IMR-90 (cell line): ENCODE measurements at regions of chr17 and their contacts with region 1.

Region 1: GRCh38 chr17:13520899-13521572 is 80.7 kb downstream of the HS3ST3A1 start:
- DNase-seq: peak; percentile 89
- ATAC-seq: peak; percentile 81
- H3K4me3 ChIP-seq: no peak overlapping the region
- H3K27ac ChIP-seq: no peak overlapping the region
- H3K4me1 ChIP-seq: peaks cover 5% of the 10 kb centered on the region
- H3K27me3 ChIP-seq: no peaks in the 10 kb centered on the region
- CTCF ChIP-seq: no peak
- POLR2A ChIP-seq: no peak
- RAD21 ChIP-seq: no peak

Region 2: DNA sequence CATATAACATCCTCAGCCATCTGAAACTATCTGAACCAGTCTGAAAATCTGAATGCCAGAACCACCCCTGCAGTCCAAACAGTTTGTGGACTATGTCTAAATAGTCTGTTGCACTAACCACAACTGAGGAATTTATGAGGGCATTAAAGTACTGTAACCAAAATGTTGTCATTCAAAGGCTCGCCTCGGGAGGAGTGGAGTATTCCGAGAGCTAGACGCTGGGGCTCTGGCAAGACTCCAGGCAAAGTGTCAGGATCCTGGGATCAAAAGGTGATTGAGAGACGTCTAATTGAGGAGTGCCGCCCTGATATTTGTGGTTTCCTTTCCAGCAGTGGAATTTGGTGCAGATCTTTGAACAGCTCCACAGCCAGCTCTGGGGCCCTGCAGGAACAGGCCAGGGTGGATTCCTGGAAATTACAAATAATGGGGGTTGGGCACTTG is 998.3 kb before region 1 on chr17:
- CTCF ChIA-PET with region 1: no interaction called
- POLR2A ChIA-PET with region 1: no interaction called
- dilution Hi-C with region 1: no loop called
- in situ Hi-C with region 1: no loop called
- intact Hi-C with region 1: no loop called
- DNase-seq: peak; percentile 69
- ATAC-seq: peak; percentile 87
- H3K4me3 ChIP-seq: no peak overlapping the region
- H3K27ac ChIP-seq: peak overlapping the region; percentile 17; the same call in 1 of the 2 replicates
- H3K4me1 ChIP-seq: peaks cover 6% of the 10 kb centered on the region; the same call in 1 of the 2 replicates
- H3K27me3 ChIP-seq: no peaks in the 10 kb centered on the region
- CTCF ChIP-seq: no peak
- POLR2A ChIP-seq: no peak
- RAD21 ChIP-seq: no peak

Region 3: GRCh38 chr17:13485354-13485753 is 35.7 kb before region 1 on chr17:
- CTCF ChIA-PET with region 1: interaction called, 7 read pairs
- POLR2A ChIA-PET with region 1: interaction called, 16 read pairs
- dilution Hi-C with region 1: no loop called
- in situ Hi-C with region 1: no loop called
- intact Hi-C with region 1: no loop called
- DNase-seq: no peak
- ATAC-seq: no peak
- H3K4me3 ChIP-seq: no peak overlapping the region
- H3K27ac ChIP-seq: no peak overlapping the region
- H3K4me1 ChIP-seq: no peaks in the 10 kb centered on the region
- H3K27me3 ChIP-seq: no peaks in the 10 kb centered on the region
- CTCF ChIP-seq: no peak
- POLR2A ChIP-seq: no peak
- RAD21 ChIP-seq: no peak